ENCODE measurements at regions of chr15 and their contacts with region 1.

Region 1: DNA sequence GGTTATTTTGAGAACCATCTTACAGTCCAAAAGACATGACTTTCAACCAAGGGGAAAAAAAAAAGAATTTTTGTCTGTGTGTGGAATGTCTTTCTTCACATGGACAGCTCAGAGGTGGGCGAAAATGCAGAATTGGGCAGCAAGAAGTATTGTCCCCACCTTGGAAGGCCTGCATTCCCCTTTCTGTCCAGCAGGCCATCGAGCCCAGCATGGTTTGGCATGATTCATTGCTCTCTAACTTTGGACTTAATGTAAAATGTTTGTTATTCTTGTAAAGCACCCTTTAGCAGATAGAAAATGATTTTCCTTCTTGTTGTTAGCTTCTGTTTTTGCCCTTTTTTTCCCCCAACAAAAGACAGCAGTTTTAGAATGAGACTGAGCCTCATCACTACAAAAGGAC is 12.4 kb downstream of the MYO1E start:
- DNase-seq: no peak
- H3K4me3 ChIP-seq: no peak overlapping the region
- H3K4me3 Mint-ChIP-seq: no peak overlapping the region
- H3K27ac ChIP-seq: no peak overlapping the region
- H3K27ac Mint-ChIP-seq: peak overlapping the region in 1 of 7 donors; percentile 5
- H3K4me1 ChIP-seq: peaks cover 11% of the 10 kb centered on the region in 2 donors
- H3K4me1 Mint-ChIP-seq: peaks cover 18% of the 10 kb centered on the region
- H3K27me3 ChIP-seq: no peaks in the 10 kb centered on the region
- H3K27me3 Mint-ChIP-seq: peaks cover 0 to 5% (median 0%) of the 10 kb centered on the region in 3 donors
- CTCF ChIP-seq: peak; percentile 39

Region 2: GRCh38 chr15:59299929-59300617 is 60.2 kb before region 1 on chr15:
- intact Hi-C with region 1: loop called in 1 of 2 experiments (anchors 10 kb)
- DNase-seq: peak; percentile 95 to 96 (median 95)
- H3K4me3 ChIP-seq: peak overlapping the region in 1 of 3 experiments; percentile 65
- H3K4me3 Mint-ChIP-seq: peak overlapping the region; percentile 72 to 84
- H3K27ac ChIP-seq: peak overlapping the region; percentile 44 to 82
- H3K27ac Mint-ChIP-seq: peak overlapping the region; percentile 91 to 99 (median 96)
- H3K4me1 ChIP-seq: peaks cover 43 to 52% of the 10 kb centered on the region in 2 donors
- H3K4me1 Mint-ChIP-seq: peaks cover 57% of the 10 kb centered on the region
- H3K27me3 ChIP-seq: no peaks in the 10 kb centered on the region
- H3K27me3 Mint-ChIP-seq: no peaks in the 10 kb centered on the region
- CTCF ChIP-seq: no peak

Region 3: GRCh38 chr15:59410391-59410896 is 50.1 kb after region 1 on chr15:
- intact Hi-C with region 1: loop called in 1 of 2 experiments (anchors 10 kb)
- DNase-seq: peak in 2 of 3 donors; percentile 31 to 39
- H3K4me3 ChIP-seq: peak overlapping the region in 1 of 3 experiments; percentile 60
- H3K4me3 Mint-ChIP-seq: peak overlapping the region; percentile 48 to 67
- H3K27ac ChIP-seq: peak overlapping the region; percentile 48 to 76
- H3K27ac Mint-ChIP-seq: peak overlapping the region; percentile 71 to 86 (median 81)
- H3K4me1 ChIP-seq: peaks cover 76 to 79% of the 10 kb centered on the region in 2 donors
- H3K4me1 Mint-ChIP-seq: peaks cover 86% of the 10 kb centered on the region
- H3K27me3 ChIP-seq: no peaks in the 10 kb centered on the region
- H3K27me3 Mint-ChIP-seq: peaks cover 0 to 4% (median 0%) of the 10 kb centered on the region in 3 donors
- CTCF ChIP-seq: no peak